ENCODE measurements at regions of chr11 and their contacts with region 1.

Region 1: GRCh38 chr11:74611369-74611861 is 19.0 kb downstream of the POLD3 start:
- DNase-seq: peak; percentile 22
- H3K4me3 ChIP-seq: no peak overlapping the region
- H3K27ac ChIP-seq: no peak overlapping the region
- H3K4me1 ChIP-seq: no peaks in the 10 kb centered on the region
- H3K27me3 ChIP-seq: no peaks in the 10 kb centered on the region
- CTCF ChIP-seq: peak; percentile 41 to 57

Region 2: GRCh38 chr11:74592441-74593362 is 18.7 kb before region 1 on chr11 and contains the start of gene POLD3:
- CTCF ChIA-PET with region 1: no interaction called
- dilution Hi-C with region 1: no loop called
- in situ Hi-C with region 1: no loop called
- intact Hi-C with region 1: loop called (anchors 2 kb)
- DNase-seq: peak; percentile 89
- H3K4me3 ChIP-seq: peak within 1 kb of the TSS; percentile 95 to 99 (median 99)
- H3K27ac ChIP-seq: peak within 1 kb of the TSS; percentile 95
- H3K4me1 ChIP-seq: peaks cover 20% of the 10 kb centered on the region
- H3K27me3 ChIP-seq: no peaks in the 10 kb centered on the region
- CTCF ChIP-seq: no peak
- total RNA-seq, gene POLD3: 11.0 to 26.8 TPM

Region 3: DNA sequence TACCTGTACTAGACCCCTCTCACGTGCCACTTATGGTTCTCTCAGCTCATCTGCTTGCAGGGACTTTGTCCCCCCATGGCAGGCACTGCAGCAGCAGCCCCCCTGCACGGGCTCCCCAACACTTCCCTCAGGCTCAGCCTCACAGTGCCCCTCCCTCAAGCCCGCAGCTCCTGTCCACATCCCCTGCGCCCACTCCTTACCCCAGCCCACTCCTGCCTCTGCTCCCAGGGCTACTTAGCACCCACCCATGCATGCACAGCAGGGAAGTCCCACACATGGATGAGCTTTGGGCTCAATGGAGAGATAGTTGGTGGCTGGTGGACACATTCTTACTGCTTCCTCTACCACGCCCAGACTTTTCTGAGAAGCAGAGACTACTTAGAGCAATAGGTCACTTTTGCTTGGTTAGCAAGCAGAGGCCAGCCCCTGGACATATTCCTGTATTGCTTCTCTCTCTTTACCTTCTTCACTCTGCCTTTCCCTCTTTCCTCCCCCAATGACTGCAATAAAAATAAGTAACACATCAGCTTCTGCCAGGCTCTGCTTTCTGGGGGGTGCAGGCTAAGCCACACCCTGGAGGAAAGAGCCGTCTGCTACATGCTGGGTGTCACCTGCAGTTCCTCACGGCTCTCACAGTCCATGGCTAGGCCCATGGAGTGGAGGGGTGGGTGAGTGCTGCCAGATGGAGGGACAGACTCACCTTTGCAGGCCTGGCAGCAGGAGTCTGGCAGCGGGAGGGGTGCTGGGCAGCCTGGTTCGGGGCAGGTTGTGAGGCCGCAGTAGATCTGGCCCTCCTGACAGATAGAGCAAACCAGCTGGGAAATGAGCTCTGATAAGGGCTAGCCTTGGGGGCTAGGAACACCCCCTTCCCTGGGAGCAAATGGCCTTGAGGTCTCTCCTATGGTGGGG is 96.4 kb after region 1 on chr11:
- CTCF ChIA-PET with region 1: no interaction called
- dilution Hi-C with region 1: loop called (anchors 5 kb)
- in situ Hi-C with region 1: no loop called
- intact Hi-C with region 1: no loop called
- DNase-seq: no peak
- H3K4me3 ChIP-seq: no peak overlapping the region
- H3K27ac ChIP-seq: no peak overlapping the region
- H3K4me1 ChIP-seq: no peaks in the 10 kb centered on the region
- H3K27me3 ChIP-seq: peaks cover 2% of the 10 kb centered on the region
- CTCF ChIP-seq: no peak

Region 4: GRCh38 chr11:74739546-74740270 is 128.3 kb after region 1 on chr11:
- CTCF ChIA-PET with region 1: no interaction called
- dilution Hi-C with region 1: no loop called
- in situ Hi-C with region 1: no loop called
- intact Hi-C with region 1: loop called (anchors 1 kb)
- DNase-seq: peak; percentile 60
- H3K4me3 ChIP-seq: no peak overlapping the region
- H3K27ac ChIP-seq: no peak overlapping the region
- H3K4me1 ChIP-seq: no peaks in the 10 kb centered on the region
- H3K27me3 ChIP-seq: peaks cover 5% of the 10 kb centered on the region
- CTCF ChIP-seq: peak; percentile 91 to 94

Measured in mammary epithelial cell (primary cell).